ENCODE measurements at regions of chr11 and their contacts with region 1.

Region 1: GRCh38 chr11:727859-728748 is 19.2 kb upstream of the TALDO1 start:
- DNase-seq: peak; percentile 89
- ATAC-seq: peak; percentile 87

Region 2: GRCh38 chr11:554824-555472 is 173.2 kb before region 1 on chr11:
- intact Hi-C with region 1: loop called (anchors 1 kb)
- DNase-seq: no peak
- ATAC-seq: peak; percentile 64

Region 3: DNA sequence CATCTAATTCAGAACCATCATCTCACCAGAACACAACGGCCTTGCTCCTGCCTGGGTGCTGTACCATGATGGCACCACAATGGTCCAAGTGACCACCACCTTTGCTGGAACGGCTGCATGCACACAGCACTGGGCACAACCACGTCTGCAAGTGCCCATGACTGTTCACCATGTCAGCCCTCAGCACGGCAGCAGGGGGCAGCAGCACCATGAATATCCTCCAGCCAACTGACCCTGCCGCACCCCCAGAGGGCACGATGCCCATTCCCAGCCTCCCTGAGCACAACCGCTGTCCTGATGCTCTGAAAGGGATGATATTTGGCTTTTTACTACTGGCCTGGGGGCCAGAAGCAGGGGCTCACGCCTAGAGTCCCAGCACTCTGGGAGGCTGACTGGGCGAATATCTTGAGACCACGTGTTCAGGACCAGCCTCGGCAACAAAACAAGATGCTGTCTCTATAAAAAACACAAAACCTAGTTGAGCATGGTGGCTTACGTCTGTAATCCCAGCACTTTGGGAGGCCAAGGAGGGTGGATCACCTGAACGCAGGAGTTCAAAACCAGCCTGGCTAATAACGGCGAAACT is 65.3 kb before region 1 on chr11:
- intact Hi-C with region 1: loop called (anchors 2 kb)
- DNase-seq: peak; percentile 79
- ATAC-seq: peak; percentile 60

Region 4: DNA sequence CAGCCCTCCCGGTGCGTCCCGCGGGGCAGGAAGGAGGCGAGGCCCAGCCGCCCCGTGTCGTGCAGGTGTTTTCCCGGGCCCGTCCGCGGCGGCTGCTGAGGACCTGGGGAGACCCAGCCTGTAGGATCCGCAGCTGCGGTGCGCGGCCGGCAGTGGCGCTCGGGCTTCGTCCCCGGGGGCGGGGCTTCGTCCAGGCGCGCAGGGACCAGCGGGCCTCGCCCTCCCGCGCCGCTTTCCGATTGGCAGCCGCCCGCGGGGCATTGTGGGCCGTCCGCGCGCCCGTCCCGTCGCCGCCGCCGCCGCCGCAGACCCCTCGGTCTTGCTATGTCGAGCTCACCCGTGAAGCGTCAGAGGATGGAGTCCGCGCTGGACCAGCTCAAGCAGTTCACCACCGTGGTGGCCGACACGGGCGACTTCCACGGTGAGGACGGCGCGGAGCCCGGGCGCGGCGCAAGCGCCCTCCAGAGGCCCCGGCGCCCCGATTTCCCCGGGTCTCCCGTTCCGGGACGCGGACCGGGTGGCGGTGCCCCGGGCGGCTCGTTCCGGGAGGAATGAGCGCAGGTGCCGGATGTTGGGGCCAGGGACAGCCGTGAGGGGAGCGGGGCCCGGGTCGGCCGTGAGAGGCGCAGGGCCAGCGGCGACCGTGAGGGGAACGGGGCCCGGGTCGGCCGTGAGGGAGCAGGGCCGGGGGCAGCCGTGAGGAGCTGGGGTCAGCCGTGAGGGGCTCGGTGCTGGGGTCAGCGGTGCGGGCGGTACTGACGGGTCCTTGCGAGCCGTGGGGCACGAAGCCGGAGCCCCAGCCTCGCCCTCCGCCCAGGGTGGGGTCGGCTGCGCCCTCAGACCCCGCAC is 19.3 kb after region 1 on chr11 and contains the start of gene TALDO1:
- intact Hi-C with region 1: no loop called
- DNase-seq: peak; percentile 96
- ATAC-seq: peak; percentile 99
- total RNA-seq, gene TALDO1: 102 TPM